ENCODE measurements at regions of chr1 and their contacts with region 1.

Region 1: GRCh38 chr1:35190784-35191183 is 2.2 kb downstream of the SFPQ start:
- DNase-seq: no peak
- H3K4me3 ChIP-seq: peak overlapping the region; percentile 92 to 99 (median 97)
- H3K27ac ChIP-seq: no peak overlapping the region
- H3K4me1 ChIP-seq: peaks cover 6 to 10% (median 8%) of the 10 kb centered on the region in 4 experiments; a peak in 6 of 7 replicates
- H3K27me3 ChIP-seq: no peaks in the 10 kb centered on the region
- CTCF ChIP-seq: no peak
- EP300 ChIP-seq: no peak
- POLR2A ChIP-seq: no peak; a peak in 1 of 3 replicates
- RAD21 ChIP-seq: no peak

Region 2: DNA sequence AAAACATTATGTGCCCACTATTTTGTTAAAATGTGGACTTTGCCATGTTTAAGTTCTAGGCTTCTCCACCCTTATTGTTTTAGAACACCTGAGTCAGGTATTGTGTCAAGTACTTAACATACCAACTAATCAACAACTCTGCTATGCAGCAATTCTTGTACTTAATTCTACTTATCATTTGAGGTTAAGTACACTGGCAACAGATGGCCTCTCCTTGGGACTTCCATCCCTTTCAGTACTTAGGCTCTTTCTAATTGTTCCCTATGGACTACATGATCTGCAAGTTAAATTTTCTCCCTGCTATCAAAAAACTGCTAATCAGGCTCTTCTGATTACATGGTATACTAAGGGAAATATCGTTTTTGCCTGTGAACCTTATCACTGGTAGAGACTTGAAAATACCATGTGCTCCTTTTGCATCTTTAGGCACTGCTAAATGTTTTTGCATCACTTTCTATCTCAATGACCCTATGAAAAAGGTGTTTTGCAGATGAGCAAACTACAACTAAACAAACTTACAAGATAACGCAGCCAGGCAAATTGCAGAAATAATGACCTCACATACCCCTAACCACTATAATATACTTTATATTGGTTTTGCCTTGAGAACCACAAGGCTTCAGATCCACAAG is 16.8 kb before region 1 on chr1:
- CTCF ChIA-PET with region 1: no interaction called
- POLR2A ChIA-PET with region 1: interaction called, 97 read pairs
- DNase-seq: no peak
- H3K4me3 ChIP-seq: no peak overlapping the region
- H3K27ac ChIP-seq: no peak overlapping the region
- H3K4me1 ChIP-seq: peaks cover 0 to 2% (median 0%) of the 10 kb centered on the region in 4 experiments; a peak in 1 of 7 replicates
- H3K27me3 ChIP-seq: no peaks in the 10 kb centered on the region
- CTCF ChIP-seq: no peak
- EP300 ChIP-seq: no peak
- POLR2A ChIP-seq: no peak
- RAD21 ChIP-seq: no peak

Region 3: DNA sequence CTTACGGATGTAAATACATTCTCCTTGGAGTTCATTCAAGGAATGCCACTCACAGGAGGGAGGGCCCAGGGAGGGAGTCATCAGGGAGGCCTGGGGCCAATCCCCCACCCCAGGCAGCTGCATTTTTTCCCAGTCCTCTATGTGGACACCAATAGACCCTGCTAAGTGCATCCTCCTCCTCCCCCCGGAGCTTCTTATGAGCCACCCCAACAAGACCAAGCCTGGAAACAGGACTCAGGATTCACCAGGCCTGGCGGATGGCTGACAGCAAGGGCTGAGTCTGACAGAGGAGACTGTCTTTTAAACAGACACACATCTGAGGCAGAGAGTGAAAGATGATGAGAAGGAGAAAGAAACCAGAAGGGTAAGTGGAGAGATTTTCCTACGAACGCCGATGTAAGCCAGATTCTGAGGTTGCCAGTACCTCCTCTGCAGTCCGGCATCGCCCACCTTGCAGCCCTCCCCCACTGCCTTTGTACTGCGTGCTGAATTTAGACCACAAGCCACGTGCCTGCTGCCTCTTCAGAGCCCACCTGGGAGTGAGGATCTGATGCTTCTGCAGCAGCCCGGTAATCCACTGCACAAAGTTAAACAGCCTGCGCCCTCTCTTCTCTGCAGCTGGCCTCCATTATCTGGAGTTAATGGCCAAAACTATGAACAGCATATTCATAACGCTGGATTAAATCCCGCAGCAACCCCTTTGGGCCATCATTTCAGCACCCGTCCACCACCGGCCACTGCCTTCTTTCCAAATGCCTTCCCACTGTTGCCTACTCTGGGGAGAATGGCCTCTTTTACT is 19.7 kb after region 1 on chr1:
- CTCF ChIA-PET with region 1: no interaction called
- POLR2A ChIA-PET with region 1: interaction called, 13 read pairs
- DNase-seq: peak; percentile 34 to 66
- H3K4me3 ChIP-seq: peak overlapping the region in 2 of 4 experiments; percentile 0 to 40; a peak in 2 of 8 replicates
- H3K27ac ChIP-seq: peak overlapping the region; percentile 64
- H3K4me1 ChIP-seq: peaks cover 7 to 11% (median 10%) of the 10 kb centered on the region in 4 experiments; a peak in 5 of 7 replicates
- H3K27me3 ChIP-seq: no peaks in the 10 kb centered on the region
- CTCF ChIP-seq: no peak
- EP300 ChIP-seq: no peak
- POLR2A ChIP-seq: peak in 1 of 2 experiments; percentile 52; a peak in 1 of 3 replicates
- RAD21 ChIP-seq: no peak

Region 4: GRCh38 chr1:35298464-35298863 is 107.7 kb after region 1 on chr1:
- CTCF ChIA-PET with region 1: no interaction called
- POLR2A ChIA-PET with region 1: interaction called, 12 read pairs
- DNase-seq: no peak
- H3K4me3 ChIP-seq: no peak overlapping the region
- H3K27ac ChIP-seq: no peak overlapping the region
- H3K4me1 ChIP-seq: peaks cover 0 to 4% (median 0%) of the 10 kb centered on the region in 4 experiments; a peak in 1 of 7 replicates
- H3K27me3 ChIP-seq: no peaks in the 10 kb centered on the region
- CTCF ChIP-seq: peak in 2 of 3 experiments; percentile 51 to 75; a peak in 2 of 4 replicates
- EP300 ChIP-seq: no peak
- POLR2A ChIP-seq: no peak
- RAD21 ChIP-seq: peak; percentile 77 to 85

Region 5: DNA sequence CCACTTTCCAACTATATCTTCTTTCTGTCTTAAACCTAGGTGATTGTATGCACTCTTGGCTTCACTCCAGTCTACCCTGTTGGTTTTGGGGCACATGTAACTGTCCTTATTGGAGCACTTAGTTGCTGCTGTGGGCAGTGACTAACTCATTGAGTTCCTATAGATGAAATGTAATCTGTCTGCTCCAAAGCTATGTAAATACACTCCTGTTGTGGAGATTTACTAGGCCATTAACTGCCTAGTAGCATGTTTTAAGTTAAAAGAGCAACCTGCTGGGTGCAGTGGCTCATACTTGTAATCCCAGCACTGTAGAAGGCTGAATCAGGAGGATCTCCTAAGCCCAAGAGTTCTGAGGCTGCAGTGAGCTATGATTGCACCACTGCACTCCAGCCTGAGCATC is 215.3 kb after region 1 on chr1:
- CTCF ChIA-PET with region 1: no interaction called
- POLR2A ChIA-PET with region 1: no interaction called
- DNase-seq: no peak
- H3K4me3 ChIP-seq: no peak overlapping the region
- H3K27ac ChIP-seq: no peak overlapping the region
- H3K4me1 ChIP-seq: peaks cover 0 to 3% (median 0%) of the 10 kb centered on the region in 4 experiments; a peak in 1 of 7 replicates
- H3K27me3 ChIP-seq: no peaks in the 10 kb centered on the region
- CTCF ChIP-seq: no peak
- EP300 ChIP-seq: no peak
- POLR2A ChIP-seq: no peak
- RAD21 ChIP-seq: no peak

Measured in H1 (cell line).